Psoas muscle (tissue), 8 donors: ENCODE measurements at regions of chr11 and their contacts with region 1.

Region 1: DNA sequence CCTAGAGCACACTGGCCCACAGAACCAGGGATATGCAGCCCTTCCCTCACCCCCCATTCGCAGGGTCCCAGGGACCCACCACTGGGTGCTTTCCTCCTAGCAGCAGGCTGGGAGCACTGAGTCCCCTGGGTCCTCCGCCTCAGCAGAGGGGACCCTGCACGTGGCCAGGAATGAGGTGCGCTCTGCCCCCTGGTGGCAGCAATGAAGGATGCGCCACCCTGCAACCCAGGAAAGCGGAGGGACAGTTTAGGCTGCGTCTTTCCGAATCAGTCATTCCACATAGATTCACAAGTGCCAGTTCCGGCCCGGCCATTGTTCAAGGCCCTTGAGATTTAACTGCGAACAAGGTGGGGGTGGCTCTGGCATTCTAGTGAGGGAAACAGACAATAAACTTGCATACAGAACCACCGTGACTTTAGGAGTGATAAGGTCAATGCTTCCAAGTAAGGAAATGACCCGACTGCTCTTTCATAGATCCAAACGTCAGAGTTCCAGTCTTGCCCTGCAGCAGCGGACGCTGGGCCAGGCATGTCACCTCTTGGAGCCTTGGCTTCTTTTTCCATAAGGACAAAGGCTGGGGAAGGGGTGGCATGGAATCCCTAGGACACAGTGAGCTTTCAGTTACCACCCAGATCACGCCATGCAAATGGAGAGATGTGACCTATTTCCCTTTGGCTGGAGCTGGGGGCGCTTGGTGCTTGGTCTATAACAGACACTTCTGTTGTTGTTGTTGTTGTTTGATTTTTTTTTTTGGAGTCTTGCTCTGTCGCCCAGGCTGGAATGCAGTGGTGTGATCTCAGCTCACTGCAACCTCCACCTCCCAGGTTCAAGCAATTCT is 7.7 kb downstream of the RIN1 start:
- DNase-seq: peak; percentile 79 to 87
- ATAC-seq: peak; percentile 81 to 91 (median 84)
- H3K4me3 ChIP-seq: peak overlapping the region; percentile 42
- H3K27ac ChIP-seq: no peak overlapping the region
- H3K4me1 ChIP-seq: peaks cover 8% of the 10 kb centered on the region
- H3K27me3 ChIP-seq: no peaks in the 10 kb centered on the region
- CTCF ChIP-seq: peak; percentile 96

Region 2: GRCh38 chr11:66311965-66312548 is 16.5 kb before region 1 on chr11:
- intact Hi-C with region 1: loop called in 1 of 2 experiments (anchors 1 kb)
- DNase-seq: peak; percentile 90 to 94
- ATAC-seq: peak; percentile 83 to 90 (median 86)
- H3K4me3 ChIP-seq: peak overlapping the region; percentile 69
- H3K27ac ChIP-seq: peak overlapping the region; percentile 75
- H3K4me1 ChIP-seq: no peaks in the 10 kb centered on the region
- H3K27me3 ChIP-seq: peaks cover 0 to 18% (median 6%) of the 10 kb centered on the region in 3 donors
- CTCF ChIP-seq: peak; percentile 90